ENCODE measurements at regions of chr1 and their contacts with region 1.

Region 1: GRCh38 chr1:151372061-151372934 is at the start of gene SELENBP1:
- DNase-seq: peak; percentile 70

Region 2: DNA sequence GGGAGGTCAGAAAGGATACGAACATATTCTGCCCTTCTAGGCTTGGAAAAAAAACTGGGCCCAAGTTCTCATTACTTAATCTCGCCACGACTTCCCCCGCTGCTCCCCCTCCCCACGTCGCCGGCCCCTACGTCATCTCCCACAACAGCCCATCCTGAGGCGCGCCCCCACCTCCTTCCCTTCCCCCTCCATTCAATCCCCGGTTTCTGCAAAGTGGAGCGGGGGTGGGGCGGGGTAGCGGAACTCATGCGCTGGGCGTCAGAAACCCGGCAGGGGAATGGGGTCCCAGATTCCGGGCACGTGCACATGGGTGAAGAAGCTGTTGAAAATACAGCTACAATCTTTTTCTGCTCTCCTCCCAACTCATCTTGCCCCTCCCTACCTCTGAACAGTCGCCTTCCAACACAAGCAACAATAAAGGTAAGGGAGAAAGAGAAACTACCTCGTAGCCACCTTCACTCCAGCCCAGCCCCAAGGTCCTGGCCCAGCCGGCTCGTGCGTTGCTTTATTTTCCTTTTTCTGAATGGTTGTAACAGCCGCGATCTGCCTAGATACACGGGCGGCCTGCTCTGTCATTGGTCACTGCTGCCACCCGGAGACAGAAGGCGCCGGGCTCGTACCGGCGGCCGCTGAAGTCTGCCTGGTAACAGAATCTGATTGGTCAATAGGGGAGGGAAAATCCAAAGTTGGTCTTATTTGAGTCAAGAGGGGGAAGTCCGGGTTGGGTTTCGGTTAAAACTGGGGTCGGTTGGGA is 25.4 kb before region 1 on chr1 and contains the start of gene RFX5:
- CTCF ChIA-PET with region 1: interaction called, 11 read pairs
- POLR2A ChIA-PET with region 1: interaction called, 9 read pairs
- DNase-seq: peak; percentile 99

Region 3: GRCh38 chr1:151399890-151400495 is 27.7 kb after region 1 on chr1:
- CTCF ChIA-PET with region 1: no interaction called
- POLR2A ChIA-PET with region 1: interaction called, 16 read pairs
- DNase-seq: peak; percentile 41

Measured in HEK293T (cell line).